Naive thymus-derived CD4-positive, alpha-beta T cell (primary cell): ENCODE measurements at regions of chr1 and their contacts with region 1.

Region 1: DNA sequence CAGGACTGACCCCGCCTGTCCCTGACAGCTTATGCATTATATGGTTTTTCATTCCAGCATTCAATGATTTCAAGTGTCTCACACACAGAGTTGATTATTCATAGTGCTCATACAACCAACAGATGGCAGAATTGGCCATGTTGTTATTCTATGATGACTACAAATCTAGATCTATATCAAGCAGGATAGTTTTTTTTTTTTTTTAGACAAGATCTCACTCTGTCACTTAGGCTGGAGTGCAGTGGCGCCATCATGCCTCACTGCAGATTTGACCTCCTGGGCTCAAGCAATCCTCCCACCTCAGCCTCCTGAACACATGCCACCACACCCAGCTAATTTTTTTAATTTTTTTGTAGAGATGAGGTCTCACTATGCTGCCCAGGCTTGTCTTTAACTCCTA is 40.1 kb upstream of the LRRC8D start:
- DNase-seq: peak in 5 of 9 donors; percentile 38 to 56 (median 41)
- ATAC-seq: peak; percentile 80
- H3K4me3 ChIP-seq: no peak overlapping the region
- H3K4me3 Mint-ChIP-seq: peak overlapping the region in 2 of 10 donors; percentile 5 to 26
- H3K27ac ChIP-seq: no peak overlapping the region
- H3K27ac Mint-ChIP-seq: peak overlapping the region in 2 of 9 donors; percentile 34 to 53
- H3K4me1 ChIP-seq: peaks cover 0 to 13% of the 10 kb centered on the region in 2 donors
- H3K4me1 Mint-ChIP-seq: peaks cover 17 to 30% (median 27%) of the 10 kb centered on the region in 7 donors
- H3K27me3 ChIP-seq: no peaks in the 10 kb centered on the region
- H3K27me3 Mint-ChIP-seq: no peaks in the 10 kb centered on the region

Region 2: GRCh38 chr1:89804642-89805237 is 24.0 kb after region 1 on chr1:
- CTCF ChIA-PET with region 1: no interaction called
- POLR2A ChIA-PET with region 1: no interaction called
- intact Hi-C with region 1: loop called in 1 of 2 experiments (anchors 1 kb)
- DNase-seq: peak; percentile 64 to 83 (median 80)
- ATAC-seq: peak; percentile 98
- H3K4me3 ChIP-seq: no peak overlapping the region
- H3K4me3 Mint-ChIP-seq: no peak overlapping the region
- H3K27ac ChIP-seq: no peak overlapping the region
- H3K27ac Mint-ChIP-seq: no peak overlapping the region
- H3K4me1 ChIP-seq: no peaks in the 10 kb centered on the region
- H3K4me1 Mint-ChIP-seq: peaks cover 0 to 6% (median 0%) of the 10 kb centered on the region in 7 donors
- H3K27me3 ChIP-seq: no peaks in the 10 kb centered on the region
- H3K27me3 Mint-ChIP-seq: peaks cover 0 to 7% (median 0%) of the 10 kb centered on the region in 5 donors

Region 3: DNA sequence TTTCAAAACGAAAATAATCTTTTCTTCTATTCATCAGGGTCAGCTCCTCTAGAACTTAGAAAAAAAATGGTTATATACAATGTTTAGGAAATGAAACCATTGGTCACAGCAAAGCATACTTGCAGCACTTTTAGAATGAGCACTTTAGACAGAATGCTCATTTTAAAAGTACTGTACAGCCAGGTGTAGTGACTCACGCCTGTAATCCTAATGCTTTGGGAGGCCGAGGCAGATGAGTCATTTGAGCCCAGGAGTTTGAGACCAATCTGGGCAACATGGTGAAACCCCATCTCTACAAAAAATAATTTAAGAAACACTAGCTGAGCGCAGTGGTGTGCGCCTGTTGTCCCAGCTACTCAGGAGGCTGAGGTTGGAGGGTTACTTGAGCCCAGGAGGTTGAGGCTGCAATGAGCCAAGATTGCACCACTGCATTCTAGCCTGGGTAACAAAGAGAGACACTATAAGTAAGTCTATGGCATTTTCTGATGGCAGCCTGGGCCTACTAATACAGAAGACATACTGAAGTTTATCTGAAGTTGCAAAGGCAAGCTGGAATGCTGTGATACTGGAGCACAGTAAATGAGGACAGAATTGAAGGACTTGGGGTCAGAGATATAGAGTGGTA is 165.2 kb after region 1 on chr1:
- CTCF ChIA-PET with region 1: no interaction called
- POLR2A ChIA-PET with region 1: no interaction called
- intact Hi-C with region 1: no loop called
- DNase-seq: no peak
- ATAC-seq: no peak
- H3K4me3 ChIP-seq: no peak overlapping the region
- H3K4me3 Mint-ChIP-seq: no peak overlapping the region
- H3K27ac ChIP-seq: no peak overlapping the region
- H3K27ac Mint-ChIP-seq: no peak overlapping the region
- H3K4me1 ChIP-seq: no peaks in the 10 kb centered on the region
- H3K4me1 Mint-ChIP-seq: peaks cover 0 to 3% (median 0%) of the 10 kb centered on the region in 7 donors
- H3K27me3 ChIP-seq: no peaks in the 10 kb centered on the region
- H3K27me3 Mint-ChIP-seq: peaks cover 0 to 4% (median 0%) of the 10 kb centered on the region in 5 donors

Region 4: DNA sequence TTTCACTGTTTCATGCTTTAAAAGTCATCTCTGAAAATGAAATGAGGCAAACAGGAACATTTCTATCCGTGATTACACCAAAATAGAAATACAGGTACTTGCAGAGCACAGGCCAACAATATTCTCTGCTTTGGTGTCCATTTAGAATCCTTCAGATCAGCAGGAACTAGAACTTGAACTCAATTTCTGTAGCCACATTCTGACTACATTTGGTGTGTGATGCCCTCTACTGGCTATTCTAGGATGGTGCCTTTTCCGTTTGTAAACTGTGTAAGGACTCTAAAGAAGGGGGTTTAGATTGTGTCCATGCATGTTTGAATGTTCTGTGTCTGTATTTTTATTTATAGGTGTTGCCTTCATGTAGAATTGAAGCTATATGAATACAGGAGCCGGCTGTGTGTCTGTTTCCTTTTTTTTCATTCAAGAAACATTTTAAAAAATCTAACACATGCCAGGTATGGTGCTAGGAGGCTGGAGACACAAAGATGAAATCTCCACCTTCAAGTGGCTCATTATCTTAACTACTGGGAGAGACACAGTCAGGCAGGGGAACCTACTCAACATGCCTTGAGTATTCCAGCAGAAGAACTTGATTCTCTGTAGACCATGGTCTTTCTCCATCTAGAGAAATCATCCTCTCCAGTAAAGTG is 206.6 kb after region 1 on chr1:
- CTCF ChIA-PET with region 1: interaction called, 11 read pairs
- POLR2A ChIA-PET with region 1: no interaction called
- intact Hi-C with region 1: loop called (anchors 1 kb)
- DNase-seq: peak in 8 of 9 donors; percentile 48 to 76 (median 70)
- ATAC-seq: peak; percentile 97
- H3K4me3 ChIP-seq: no peak overlapping the region
- H3K4me3 Mint-ChIP-seq: no peak overlapping the region
- H3K27ac ChIP-seq: no peak overlapping the region
- H3K27ac Mint-ChIP-seq: no peak overlapping the region
- H3K4me1 ChIP-seq: no peaks in the 10 kb centered on the region
- H3K4me1 Mint-ChIP-seq: no peaks in the 10 kb centered on the region
- H3K27me3 ChIP-seq: no peaks in the 10 kb centered on the region
- H3K27me3 Mint-ChIP-seq: peaks cover 0 to 13% (median 4%) of the 10 kb centered on the region in 5 donors

Region 5: GRCh38 chr1:89994805-89995597 is 214.3 kb after region 1 on chr1 and contains the start of gene ZNF326:
- CTCF ChIA-PET with region 1: interaction called, 5 read pairs
- POLR2A ChIA-PET with region 1: no interaction called
- intact Hi-C with region 1: loop called in 1 of 2 experiments (anchors 2 kb)
- DNase-seq: peak; percentile 88 to 99 (median 93)
- ATAC-seq: peak; percentile 98
- H3K4me3 ChIP-seq: peak within 1 kb of the TSS; percentile 86
- H3K4me3 Mint-ChIP-seq: peak within 1 kb of the TSS; percentile 91 to 100 (median 99)
- H3K27ac ChIP-seq: peak within 1 kb of the TSS; percentile 85
- H3K27ac Mint-ChIP-seq: peak within 1 kb of the TSS; percentile 90 to 98 (median 96)
- H3K4me1 ChIP-seq: peaks cover 8 to 14% of the 10 kb centered on the region in 2 donors
- H3K4me1 Mint-ChIP-seq: peaks cover 28 to 47% (median 43%) of the 10 kb centered on the region in 7 donors
- H3K27me3 ChIP-seq: no peaks in the 10 kb centered on the region
- H3K27me3 Mint-ChIP-seq: peaks cover 0 to 7% (median 4%) of the 10 kb centered on the region in 5 donors
- total RNA-seq, gene ZNF326: 17.3 to 52.5 (median 23.5) TPM

Region 6: DNA sequence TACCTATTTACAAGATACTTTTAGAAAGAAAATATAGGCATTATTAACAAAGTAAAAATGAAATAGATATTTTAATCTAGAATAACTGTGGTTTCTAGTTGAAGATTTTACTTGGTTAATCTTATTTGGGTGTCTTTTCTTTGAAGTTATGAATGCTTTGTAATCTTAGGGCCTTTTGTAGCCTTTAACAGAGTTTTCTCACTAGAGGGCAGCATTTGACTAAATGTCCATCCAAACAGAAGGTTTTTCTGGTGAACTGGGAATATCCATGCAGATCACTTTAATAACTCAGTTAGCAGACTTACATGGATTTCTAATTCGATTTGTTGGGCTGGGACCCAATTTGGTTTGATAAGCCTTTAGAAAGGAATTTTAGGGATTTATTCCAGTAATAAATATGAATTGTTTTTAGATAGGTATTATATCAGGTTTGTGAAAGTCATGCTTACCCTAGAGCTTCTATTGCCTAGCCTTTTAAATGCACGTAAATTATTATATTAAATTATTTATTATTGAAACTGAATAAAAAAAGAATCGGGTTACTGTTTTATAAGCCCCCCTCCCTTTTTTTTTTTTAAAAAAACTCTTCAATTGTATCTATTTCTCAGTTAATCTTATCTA is 333.9 kb after region 1 on chr1:
- CTCF ChIA-PET with region 1: no interaction called
- POLR2A ChIA-PET with region 1: no interaction called
- intact Hi-C with region 1: loop called in 1 of 2 experiments (anchors 5 kb)
- DNase-seq: peak in 3 of 9 donors; percentile 3 to 18 (median 3)
- ATAC-seq: no peak
- H3K4me3 ChIP-seq: no peak overlapping the region
- H3K4me3 Mint-ChIP-seq: no peak overlapping the region
- H3K27ac ChIP-seq: no peak overlapping the region
- H3K27ac Mint-ChIP-seq: no peak overlapping the region
- H3K4me1 ChIP-seq: no peaks in the 10 kb centered on the region
- H3K4me1 Mint-ChIP-seq: no peaks in the 10 kb centered on the region
- H3K27me3 ChIP-seq: peaks cover 0 to 4% of the 10 kb centered on the region in 2 donors
- H3K27me3 Mint-ChIP-seq: peaks cover 26 to 50% (median 31%) of the 10 kb centered on the region in 5 donors